ENCODE measurements at regions of chr5 and their contacts with region 1.

Region 1: GRCh38 chr5:15676591-15676990 is 176.6 kb downstream of the FBXL7 start:
- DNase-seq: no peak
- ATAC-seq: no peak
- H3K4me3 ChIP-seq: no peak overlapping the region
- H3K4me3 Mint-ChIP-seq: no peak overlapping the region
- H3K27ac ChIP-seq: no peak overlapping the region
- H3K27ac Mint-ChIP-seq: no peak overlapping the region
- H3K4me1 ChIP-seq: no peaks in the 10 kb centered on the region
- H3K4me1 Mint-ChIP-seq: no peaks in the 10 kb centered on the region
- H3K27me3 ChIP-seq: no peaks in the 10 kb centered on the region
- H3K27me3 Mint-ChIP-seq: no peaks in the 10 kb centered on the region

Region 2: DNA sequence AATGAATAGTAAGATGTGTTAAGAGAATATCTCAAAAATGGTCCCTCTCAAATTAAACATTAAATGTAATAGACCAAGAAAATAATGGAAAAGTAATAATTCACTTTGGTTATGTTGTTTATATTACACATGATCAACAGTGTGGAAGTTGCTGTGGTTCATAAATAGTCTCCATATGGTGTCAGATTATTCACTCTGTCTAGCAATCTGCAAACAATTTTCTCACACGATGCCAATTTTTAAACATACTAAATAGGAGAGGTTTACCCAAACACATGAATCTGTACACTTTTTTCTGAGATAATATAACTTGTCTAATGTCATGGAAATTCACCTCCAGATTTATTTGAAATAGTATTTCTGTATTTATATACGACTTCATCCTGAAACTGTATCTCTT is 394.0 kb before region 1 on chr5:
- CTCF ChIA-PET with region 1: no interaction called
- POLR2A ChIA-PET with region 1: no interaction called
- intact Hi-C with region 1: no loop called
- DNase-seq: no peak
- ATAC-seq: no peak
- H3K4me3 ChIP-seq: no peak overlapping the region
- H3K4me3 Mint-ChIP-seq: no peak overlapping the region
- H3K27ac ChIP-seq: no peak overlapping the region
- H3K27ac Mint-ChIP-seq: no peak overlapping the region
- H3K4me1 ChIP-seq: no peaks in the 10 kb centered on the region
- H3K4me1 Mint-ChIP-seq: no peaks in the 10 kb centered on the region
- H3K27me3 ChIP-seq: no peaks in the 10 kb centered on the region
- H3K27me3 Mint-ChIP-seq: no peaks in the 10 kb centered on the region

Region 3: DNA sequence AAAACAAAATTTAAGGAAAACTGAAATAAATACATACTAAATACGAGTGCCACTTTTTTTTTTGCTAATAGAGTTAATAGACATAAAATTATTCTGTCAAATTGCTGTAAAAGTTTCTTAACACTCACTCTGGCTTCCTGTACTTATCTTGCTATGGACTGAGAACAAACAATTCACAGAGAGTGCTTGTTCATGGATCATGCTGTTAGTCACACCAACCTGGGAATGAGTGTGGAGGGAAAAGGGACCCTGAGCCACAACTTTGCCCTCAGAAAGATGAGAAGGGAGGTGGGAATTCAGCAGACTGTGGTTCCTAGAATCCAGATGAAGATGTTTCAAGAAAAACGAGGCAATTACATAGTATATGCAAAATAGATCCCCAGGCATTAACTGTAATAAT is 70.2 kb after region 1 on chr5:
- CTCF ChIA-PET with region 1: no interaction called
- POLR2A ChIA-PET with region 1: no interaction called
- intact Hi-C with region 1: no loop called
- DNase-seq: no peak
- ATAC-seq: no peak
- H3K4me3 ChIP-seq: no peak overlapping the region
- H3K4me3 Mint-ChIP-seq: no peak overlapping the region
- H3K27ac ChIP-seq: no peak overlapping the region
- H3K27ac Mint-ChIP-seq: no peak overlapping the region
- H3K4me1 ChIP-seq: no peaks in the 10 kb centered on the region
- H3K4me1 Mint-ChIP-seq: no peaks in the 10 kb centered on the region
- H3K27me3 ChIP-seq: no peaks in the 10 kb centered on the region
- H3K27me3 Mint-ChIP-seq: no peaks in the 10 kb centered on the region

Region 4: GRCh38 chr5:15864536-15865215 is 188.1 kb after region 1 on chr5:
- CTCF ChIA-PET with region 1: no interaction called
- POLR2A ChIA-PET with region 1: no interaction called
- intact Hi-C with region 1: loop called in 1 of 2 experiments (anchors 10 kb)
- DNase-seq: no peak
- ATAC-seq: no peak
- H3K4me3 ChIP-seq: no peak overlapping the region
- H3K4me3 Mint-ChIP-seq: no peak overlapping the region
- H3K27ac ChIP-seq: no peak overlapping the region
- H3K27ac Mint-ChIP-seq: no peak overlapping the region
- H3K4me1 ChIP-seq: no peaks in the 10 kb centered on the region
- H3K4me1 Mint-ChIP-seq: no peaks in the 10 kb centered on the region
- H3K27me3 ChIP-seq: no peaks in the 10 kb centered on the region
- H3K27me3 Mint-ChIP-seq: no peaks in the 10 kb centered on the region

Measured in naive thymus-derived CD4-positive, alpha-beta T cell (primary cell).